BJ (cell line): ENCODE measurements at regions of chrX and their contacts with region 1.

Region 1: GRCh38 chrX:152926279-152926678 is 28.4 kb downstream of the ZNF185 start:
- DNase-seq: no peak
- H3K4me3 ChIP-seq: no peak overlapping the region
- H3K27me3 ChIP-seq: no peaks in the 10 kb centered on the region
- CTCF ChIP-seq: peak; percentile 51

Region 2: GRCh38 chrX:152915527-152916241 is 10.6 kb before region 1 on chrX:
- CTCF ChIA-PET with region 1: interaction called, 15 read pairs
- POLR2A ChIA-PET with region 1: no interaction called
- DNase-seq: no peak
- H3K4me3 ChIP-seq: no peak overlapping the region
- H3K27me3 ChIP-seq: no peaks in the 10 kb centered on the region
- CTCF ChIP-seq: peak; percentile 57

Region 3: GRCh38 chrX:152941328-152942106 is 15.2 kb after region 1 on chrX:
- CTCF ChIA-PET with region 1: interaction called, 14 read pairs
- POLR2A ChIA-PET with region 1: no interaction called
- DNase-seq: peak; percentile 58
- H3K4me3 ChIP-seq: peak overlapping the region; percentile 54
- H3K27me3 ChIP-seq: no peaks in the 10 kb centered on the region
- CTCF ChIP-seq: peak; percentile 76

Region 4: DNA sequence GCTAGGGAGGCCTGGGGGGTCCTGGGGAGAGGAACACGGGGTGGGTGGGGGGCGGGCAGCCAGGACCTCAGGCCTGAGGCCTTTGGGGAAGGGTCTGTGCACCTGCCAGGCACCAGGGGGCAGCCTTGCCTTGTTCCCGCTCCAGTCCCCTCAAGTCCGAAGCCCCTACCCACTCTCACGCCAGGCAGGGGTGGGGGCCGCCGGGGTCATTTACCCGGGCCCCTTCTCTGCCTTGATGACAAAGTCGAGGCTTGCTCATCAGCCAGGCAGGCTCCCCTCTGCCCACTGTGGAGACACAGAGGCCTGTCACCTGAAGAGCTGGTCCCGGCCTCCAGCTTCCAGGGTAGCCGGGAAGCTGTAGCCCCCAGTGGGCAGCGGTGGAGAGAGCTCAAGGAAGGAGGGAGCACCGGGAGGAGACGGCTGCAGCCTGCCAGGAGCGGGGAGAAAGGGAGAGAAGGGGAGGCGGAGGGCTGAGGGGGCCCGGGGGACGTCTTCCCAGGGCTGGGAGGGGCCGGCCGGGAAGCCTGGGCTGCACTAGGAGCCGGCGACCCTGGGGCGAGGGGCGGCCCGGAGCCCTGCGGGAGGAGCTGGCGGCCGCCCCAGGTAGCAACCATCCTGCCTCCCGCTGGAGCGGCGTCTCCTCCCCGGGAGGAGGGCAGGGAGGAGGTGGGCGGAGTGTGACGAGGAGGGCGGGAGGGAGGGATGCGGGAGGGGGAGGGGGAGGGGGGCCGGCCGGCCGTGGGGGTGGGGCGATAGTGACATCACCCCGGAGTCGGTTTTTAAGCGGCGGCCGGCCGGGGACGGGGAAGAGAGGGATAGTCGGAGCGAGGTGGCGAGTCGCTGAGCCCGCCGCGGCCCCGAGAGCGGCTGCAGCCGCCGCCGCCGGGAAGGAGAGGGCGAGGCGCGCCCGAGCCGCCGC is 761.1 kb after region 1 on chrX and contains the start of gene SLC6A8:
- CTCF ChIA-PET with region 1: no interaction called
- POLR2A ChIA-PET with region 1: no interaction called
- DNase-seq: no peak
- H3K4me3 ChIP-seq: peak within 1 kb of the TSS; percentile 45
- H3K27me3 ChIP-seq: no peaks in the 10 kb centered on the region
- CTCF ChIP-seq: peak; percentile 35; the same call in 1 of the 2 replicates
- polyA plus RNA-seq, gene SLC6A8: 8.3 and 11.9 TPM in 2 replicates